Heart right ventricle (tissue), 16 donors: ENCODE measurements at regions of chr13 and their contacts with region 1.

Region 1: GRCh38 chr13:28564080-28564868 is 69.3 kb upstream of the FLT1 start:
- DNase-seq: no peak
- ATAC-seq: no peak
- H3K4me3 ChIP-seq: no peak overlapping the region
- H3K27ac ChIP-seq: no peak overlapping the region
- H3K4me1 ChIP-seq: peaks cover 0 to 13% (median 4%) of the 10 kb centered on the region in 9 donors
- H3K27me3 ChIP-seq: no peaks in the 10 kb centered on the region
- CTCF ChIP-seq: no peak

Region 2: GRCh38 chr13:28581451-28581850 is 17.2 kb after region 1 on chr13:
- intact Hi-C with region 1: loop called in 1 of 10 experiments (anchors 2 kb)
- DNase-seq: no peak
- ATAC-seq: no peak
- H3K4me3 ChIP-seq: no peak overlapping the region
- H3K27ac ChIP-seq: no peak overlapping the region
- H3K4me1 ChIP-seq: peaks cover 0 to 18% (median 0%) of the 10 kb centered on the region in 9 donors
- H3K27me3 ChIP-seq: peaks cover 0 to 15% (median 3%) of the 10 kb centered on the region in 7 donors
- CTCF ChIP-seq: no peak